Tibial artery (tissue), 4 donors: ENCODE measurements at regions of chr9 and their contacts with region 1.

Region 1: DNA sequence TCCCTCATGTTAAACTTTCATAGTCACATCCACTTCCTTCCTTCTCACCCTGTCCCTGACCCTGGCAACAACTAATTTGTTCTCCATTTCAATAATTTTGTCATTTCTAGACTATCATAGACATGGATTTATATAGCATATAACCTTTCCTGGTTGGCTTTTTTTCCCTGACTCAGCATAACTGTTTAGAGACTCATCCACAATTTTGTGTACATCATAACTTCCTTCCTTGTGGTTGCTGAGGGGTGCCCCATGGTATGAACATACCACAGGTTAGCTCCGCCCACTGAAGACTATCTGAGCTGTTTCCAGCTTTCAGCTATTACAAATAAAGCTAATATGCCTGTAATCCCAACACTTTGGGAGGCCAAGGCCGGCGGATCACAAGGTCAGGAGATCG is 137.3 kb downstream of the PHF2 start:
- DNase-seq: no peak
- H3K4me3 ChIP-seq: no peak overlapping the region
- H3K27ac ChIP-seq: no peak overlapping the region
- H3K4me1 ChIP-seq: no peaks in the 10 kb centered on the region
- H3K27me3 ChIP-seq: no peaks in the 10 kb centered on the region
- CTCF ChIP-seq: no peak

Region 2: GRCh38 chr9:92384375-92384774 is 1329.3 kb before region 1 on chr9:
- intact Hi-C with region 1: no loop called
- DNase-seq: no peak
- H3K4me3 ChIP-seq: no peak overlapping the region
- H3K27ac ChIP-seq: peak overlapping the region; percentile 61 to 68
- H3K4me1 ChIP-seq: peaks cover 0 to 27% (median 0%) of the 10 kb centered on the region in 4 donors
- H3K27me3 ChIP-seq: no peaks in the 10 kb centered on the region
- CTCF ChIP-seq: no peak

Region 3: DNA sequence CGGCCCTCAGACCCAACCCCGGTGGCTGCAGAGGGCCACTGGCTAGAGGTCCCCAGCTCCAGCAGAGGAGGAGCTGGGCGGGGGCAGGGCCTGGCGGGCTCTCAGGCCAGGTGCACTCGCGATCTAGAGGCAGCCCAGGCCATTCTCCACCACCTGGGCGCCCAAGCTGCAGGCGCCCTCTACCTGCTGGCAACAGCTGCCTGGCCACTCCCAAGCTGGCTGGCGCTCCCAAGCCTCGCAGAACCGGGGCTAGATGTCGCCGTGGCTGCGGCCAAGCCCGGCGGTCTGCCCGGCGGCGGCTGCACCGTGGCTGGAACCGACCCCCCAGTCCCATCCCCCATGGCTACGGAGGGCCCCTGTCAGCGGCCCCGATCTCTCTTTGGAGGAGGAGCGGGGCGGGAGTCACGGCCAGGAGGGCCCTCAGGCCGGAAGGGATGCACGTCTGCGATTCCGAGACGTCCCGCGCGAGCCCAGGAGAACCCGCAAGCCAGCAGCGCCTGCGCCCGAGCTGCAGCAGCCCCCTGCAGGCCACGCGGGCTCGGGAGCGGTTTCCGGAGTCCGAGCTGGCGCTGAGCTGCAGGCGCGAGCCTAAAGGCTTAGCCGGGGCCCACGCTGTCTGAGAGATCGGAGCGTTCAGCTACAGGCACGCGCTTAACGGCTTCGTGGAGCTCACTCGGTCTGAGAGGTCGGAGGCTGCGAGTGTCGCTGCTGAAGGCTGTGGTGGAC is 904.8 kb before region 1 on chr9:
- intact Hi-C with region 1: no loop called
- DNase-seq: peak; percentile 46 to 71
- H3K4me3 ChIP-seq: peak overlapping the region in 1 of 2 donors; percentile 32
- H3K27ac ChIP-seq: no peak overlapping the region
- H3K4me1 ChIP-seq: peaks cover 0 to 31% (median 30%) of the 10 kb centered on the region in 4 donors
- H3K27me3 ChIP-seq: peaks cover 10 to 92% of the 10 kb centered on the region in 2 donors
- CTCF ChIP-seq: no peak

Region 4: DNA sequence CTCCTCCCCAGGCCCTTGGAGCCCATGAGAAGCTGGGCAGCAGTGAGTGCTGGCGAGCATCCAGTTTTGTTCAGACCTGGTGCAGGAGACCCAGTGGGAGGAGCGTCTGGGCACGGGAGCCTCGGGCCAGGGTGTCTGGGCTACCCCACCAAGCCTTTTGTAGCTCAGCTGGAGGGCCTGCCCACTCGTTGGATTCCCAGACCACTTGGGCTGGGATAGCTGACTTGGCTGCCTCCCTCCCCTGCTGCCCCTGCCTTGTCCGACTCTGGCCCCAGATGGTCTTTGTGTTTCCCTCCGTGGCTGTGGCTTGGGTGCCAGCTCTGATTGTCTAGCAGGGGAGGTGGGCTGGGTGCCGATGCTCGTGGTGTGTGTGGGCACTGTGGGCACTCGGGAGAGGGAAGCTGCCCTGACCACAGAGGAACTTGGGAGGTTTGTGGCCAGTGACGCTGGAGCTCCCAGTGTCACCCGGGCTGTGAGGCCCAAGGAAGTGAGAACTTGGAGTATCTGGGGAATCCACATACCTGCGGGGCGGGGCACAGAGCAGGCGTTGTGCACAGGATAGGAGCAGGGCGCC is 482.5 kb before region 1 on chr9:
- intact Hi-C with region 1: loop called (anchors 5 kb)
- DNase-seq: no peak
- H3K4me3 ChIP-seq: no peak overlapping the region
- H3K27ac ChIP-seq: no peak overlapping the region
- H3K4me1 ChIP-seq: peaks cover 0 to 12% (median 0%) of the 10 kb centered on the region in 4 donors
- H3K27me3 ChIP-seq: peaks cover 0 to 5% of the 10 kb centered on the region in 2 donors
- CTCF ChIP-seq: no peak

Region 5: DNA sequence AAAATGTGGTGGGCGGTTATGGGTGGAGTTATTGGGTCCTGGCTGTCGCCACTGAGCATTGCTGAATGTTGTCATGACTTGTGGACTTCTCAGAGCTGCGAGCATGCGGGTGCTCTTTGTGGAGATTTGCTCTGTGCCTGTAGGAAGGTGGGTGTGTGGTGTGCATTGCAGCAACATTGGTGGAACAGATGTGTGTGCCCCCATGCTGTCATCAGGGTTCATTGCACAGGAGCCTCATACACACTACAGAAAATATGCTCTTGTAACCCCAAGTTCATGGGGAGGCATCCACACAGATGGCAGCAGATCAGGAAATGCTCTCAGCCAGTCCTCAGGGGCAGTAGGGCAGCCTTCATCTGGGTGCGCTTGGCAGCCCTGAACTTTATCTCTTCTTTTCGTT is 193.2 kb before region 1 on chr9:
- intact Hi-C with region 1: no loop called
- DNase-seq: no peak
- H3K4me3 ChIP-seq: no peak overlapping the region
- H3K27ac ChIP-seq: no peak overlapping the region
- H3K4me1 ChIP-seq: no peaks in the 10 kb centered on the region
- H3K27me3 ChIP-seq: no peaks in the 10 kb centered on the region
- CTCF ChIP-seq: no peak